Natural killer cell (primary cell): ENCODE measurements at regions of chr4 and their contacts with region 1.

Region 1: GRCh38 chr4:163554870-163555465 is 60.5 kb downstream of the TMA16 start:
- DNase-seq: peak in 1 of 2 donors; percentile 56
- ATAC-seq: no peak
- H3K4me3 ChIP-seq: no peak overlapping the region
- H3K4me3 Mint-ChIP-seq: no peak overlapping the region
- H3K27ac ChIP-seq: no peak overlapping the region
- H3K27ac Mint-ChIP-seq: no peak overlapping the region
- H3K4me1 ChIP-seq: peaks cover 14% of the 10 kb centered on the region
- H3K4me1 Mint-ChIP-seq: peaks cover 22 to 26% of the 10 kb centered on the region in 2 donors
- H3K27me3 ChIP-seq: no peaks in the 10 kb centered on the region
- H3K27me3 Mint-ChIP-seq: peaks cover 0 to 3% of the 10 kb centered on the region in 2 donors
- CTCF ChIP-seq: peak; percentile 77

Region 2: GRCh38 chr4:163523791-163524365 is 31.1 kb before region 1 on chr4:
- intact Hi-C with region 1: no loop called
- DNase-seq: no peak
- ATAC-seq: no peak
- H3K4me3 ChIP-seq: no peak overlapping the region
- H3K4me3 Mint-ChIP-seq: no peak overlapping the region
- H3K27ac ChIP-seq: no peak overlapping the region
- H3K27ac Mint-ChIP-seq: no peak overlapping the region
- H3K4me1 ChIP-seq: no peaks in the 10 kb centered on the region
- H3K4me1 Mint-ChIP-seq: no peaks in the 10 kb centered on the region
- H3K27me3 ChIP-seq: no peaks in the 10 kb centered on the region
- H3K27me3 Mint-ChIP-seq: no peaks in the 10 kb centered on the region
- CTCF ChIP-seq: no peak

Region 3: DNA sequence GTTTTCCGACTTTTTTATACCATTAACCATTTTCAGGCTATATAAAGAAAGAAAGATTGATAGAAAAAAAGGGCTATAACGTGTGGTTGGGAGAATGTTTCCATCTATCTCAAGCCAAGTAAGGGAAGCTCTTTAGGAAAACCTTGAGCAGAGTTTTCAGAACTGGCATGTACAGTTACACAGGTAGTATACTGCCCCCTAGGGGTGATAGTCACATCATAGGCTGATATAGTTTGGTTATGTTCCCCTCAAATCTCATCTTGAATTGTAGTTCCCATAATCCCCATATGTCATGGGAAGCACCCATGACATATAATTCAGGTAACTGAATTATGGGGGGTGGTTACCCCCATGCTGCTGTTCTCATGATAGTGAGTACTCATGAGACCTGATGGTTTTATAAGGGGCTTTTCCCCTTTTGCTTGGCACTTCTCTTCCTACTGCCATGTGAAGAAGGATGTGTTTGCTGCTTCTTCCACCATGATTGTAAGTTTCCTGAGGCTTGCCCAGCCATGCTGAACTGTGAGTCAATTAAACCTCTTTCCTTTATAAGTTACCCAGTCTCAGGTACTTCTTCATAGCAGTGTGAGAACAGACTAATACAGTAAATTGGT is 126.3 kb after region 1 on chr4:
- intact Hi-C with region 1: loop called (anchors 2 kb)
- DNase-seq: peak in 1 of 2 donors; percentile 80
- ATAC-seq: peak in 2 of 3 donors; percentile 47 to 65
- H3K4me3 ChIP-seq: no peak overlapping the region
- H3K4me3 Mint-ChIP-seq: no peak overlapping the region
- H3K27ac ChIP-seq: no peak overlapping the region
- H3K27ac Mint-ChIP-seq: no peak overlapping the region
- H3K4me1 ChIP-seq: no peaks in the 10 kb centered on the region
- H3K4me1 Mint-ChIP-seq: no peaks in the 10 kb centered on the region
- H3K27me3 ChIP-seq: no peaks in the 10 kb centered on the region
- H3K27me3 Mint-ChIP-seq: peaks cover 0 to 7% of the 10 kb centered on the region in 2 donors
- CTCF ChIP-seq: peak; percentile 44

Region 4: DNA sequence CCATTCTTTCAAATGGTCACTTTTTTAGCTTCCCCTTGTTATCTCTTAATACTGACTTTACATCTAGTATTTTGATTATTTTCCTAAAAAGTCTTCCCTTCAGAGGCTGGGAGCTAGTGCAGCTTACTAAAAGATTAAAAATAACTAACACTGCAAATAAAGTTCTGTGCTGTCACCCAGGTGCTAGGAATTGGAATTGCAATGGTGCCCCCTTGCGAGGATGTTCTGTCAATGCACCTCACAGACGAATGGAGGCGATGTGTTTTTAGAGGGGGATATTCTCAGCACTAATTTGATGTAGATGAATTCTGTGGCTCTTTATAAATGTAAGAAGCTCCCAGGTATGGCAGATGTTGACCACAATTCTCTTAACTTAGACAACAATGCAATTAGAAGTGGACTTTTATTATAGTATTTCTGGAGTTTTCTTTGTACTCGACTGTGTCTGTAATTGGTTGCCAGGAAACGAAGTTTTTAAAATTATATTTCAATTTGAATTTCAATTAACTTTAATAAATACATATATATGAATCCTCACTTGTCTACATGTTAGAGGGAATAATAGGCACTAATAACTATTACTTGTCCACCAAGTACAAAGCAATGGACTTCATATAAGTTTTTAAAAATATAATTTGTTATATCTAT is 1177.0 kb after region 1 on chr4:
- intact Hi-C with region 1: loop called (anchors 1 kb)
- DNase-seq: peak; percentile 43 to 68
- ATAC-seq: peak; percentile 65 to 75 (median 73)
- H3K4me3 ChIP-seq: no peak overlapping the region
- H3K4me3 Mint-ChIP-seq: no peak overlapping the region
- H3K27ac ChIP-seq: no peak overlapping the region
- H3K27ac Mint-ChIP-seq: no peak overlapping the region
- H3K4me1 ChIP-seq: no peaks in the 10 kb centered on the region
- H3K4me1 Mint-ChIP-seq: peaks cover 8 to 40% of the 10 kb centered on the region in 2 donors
- H3K27me3 ChIP-seq: no peaks in the 10 kb centered on the region
- H3K27me3 Mint-ChIP-seq: peaks cover 0 to 5% of the 10 kb centered on the region in 2 donors
- CTCF ChIP-seq: peak; percentile 95

Region 5: DNA sequence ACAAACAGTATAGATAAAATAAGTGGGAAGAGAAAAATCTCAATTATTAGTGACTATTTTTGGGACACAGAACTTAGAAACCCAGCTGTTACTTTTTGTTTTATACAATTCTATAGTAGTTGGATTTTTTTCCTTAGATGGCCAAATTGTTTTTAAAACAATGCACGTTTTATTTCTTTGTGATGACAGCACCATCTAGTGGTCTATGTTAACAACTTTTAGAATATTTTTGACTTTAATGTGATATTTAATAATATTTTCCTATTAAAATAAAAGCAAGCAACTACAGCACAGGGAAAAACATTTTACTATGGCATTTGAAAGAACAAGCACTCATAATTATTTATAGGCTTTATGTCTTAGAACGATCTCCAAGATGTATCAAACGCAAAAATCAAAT is 1193.4 kb after region 1 on chr4:
- intact Hi-C with region 1: loop called (anchors 5 kb)
- DNase-seq: peak in 1 of 2 donors; percentile 27
- ATAC-seq: no peak
- H3K4me3 ChIP-seq: no peak overlapping the region
- H3K4me3 Mint-ChIP-seq: no peak overlapping the region
- H3K27ac ChIP-seq: no peak overlapping the region
- H3K27ac Mint-ChIP-seq: no peak overlapping the region
- H3K4me1 ChIP-seq: no peaks in the 10 kb centered on the region
- H3K4me1 Mint-ChIP-seq: no peaks in the 10 kb centered on the region
- H3K27me3 ChIP-seq: no peaks in the 10 kb centered on the region
- H3K27me3 Mint-ChIP-seq: peaks cover 0 to 4% of the 10 kb centered on the region in 2 donors
- CTCF ChIP-seq: peak; percentile 57